Activated T-helper 1 cell treated with anti-CD3 and anti-CD28 coated beads, Interleukin-12 subunit alpha, Interleukin-12 subunit beta, Interleukin-2, Interleukin-4 antibody, amounts not matched to agents 30 ng/mL and 10 ng/mL and 1 ng/mL, durations not matched to agents 14 hours and 24 hours and 36 hours (primary cell): ENCODE measurements at regions of chr4 and their contacts with region 1.

Region 1: DNA sequence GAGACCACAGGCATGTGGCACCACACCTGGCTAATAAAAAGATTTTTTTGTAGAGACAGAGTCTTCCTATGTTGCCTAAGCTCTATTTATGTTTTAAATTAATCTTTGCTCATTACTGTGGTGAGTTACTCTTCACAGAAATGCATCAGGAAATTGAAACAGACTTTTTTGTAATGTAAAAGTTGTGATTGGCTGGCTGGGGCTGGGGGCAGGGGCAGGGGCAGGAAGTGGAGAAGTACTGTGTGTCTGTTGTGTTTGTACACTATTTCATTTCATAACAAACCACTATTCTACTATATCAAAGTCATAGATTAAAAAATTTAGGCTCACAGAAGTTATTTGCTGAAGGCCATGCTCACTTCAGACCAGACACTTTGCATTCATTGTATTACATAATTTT is 19.1 kb upstream of the ABRAXAS1 start:
- DNase-seq: no peak
- H3K4me3 Mint-ChIP-seq: no peak overlapping the region
- H3K27ac Mint-ChIP-seq: no peak overlapping the region
- H3K4me1 Mint-ChIP-seq: peaks cover 6% of the 10 kb centered on the region
- H3K27me3 Mint-ChIP-seq: no peaks in the 10 kb centered on the region

Region 2: DNA sequence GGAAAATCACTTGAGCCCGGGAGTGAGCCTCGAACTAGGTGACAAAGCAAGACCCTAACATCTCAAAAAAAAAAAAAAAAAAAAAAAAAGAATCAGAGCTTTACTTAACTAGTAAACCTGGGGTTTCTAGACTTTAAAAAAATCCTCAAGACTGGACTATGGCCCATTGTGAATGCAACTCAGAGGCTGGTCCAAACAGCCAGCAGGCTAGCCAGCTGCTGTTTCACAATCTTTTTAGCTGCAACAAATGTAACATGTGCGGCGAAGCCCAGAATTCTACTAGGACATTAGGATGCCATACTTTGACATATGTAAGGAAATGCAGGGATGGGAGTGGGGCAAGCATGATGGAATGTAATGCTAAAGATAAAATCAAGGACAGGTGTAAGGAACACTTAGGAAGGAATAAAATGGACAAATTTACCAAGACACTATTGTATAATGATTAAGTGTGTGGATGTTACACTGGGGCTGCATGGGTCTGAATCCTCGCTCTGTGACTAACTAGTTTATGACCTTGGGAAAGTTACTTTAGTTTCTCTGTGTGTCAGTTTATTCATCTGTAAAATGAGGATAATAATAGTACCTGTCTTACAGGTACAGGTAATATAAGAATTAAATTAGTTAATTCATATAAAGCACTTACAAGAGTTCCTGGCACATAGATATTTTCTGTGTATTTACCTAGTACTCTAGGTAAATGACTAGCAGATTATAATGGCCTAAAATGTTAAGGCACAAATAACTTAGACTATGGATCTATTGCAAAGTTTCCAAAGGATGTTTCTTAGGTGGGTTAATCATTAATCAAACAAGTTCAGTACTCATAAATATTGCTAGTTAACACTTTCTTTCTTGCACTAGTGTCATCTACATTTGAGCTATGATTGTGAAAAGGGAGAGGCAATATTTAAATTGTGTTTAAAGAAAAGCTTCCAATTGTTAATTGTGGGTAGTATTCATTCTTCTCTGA is 97.8 kb before region 1 on chr4:
- intact Hi-C with region 1: no loop called
- DNase-seq: no peak
- H3K4me3 Mint-ChIP-seq: no peak overlapping the region
- H3K27ac Mint-ChIP-seq: no peak overlapping the region
- H3K4me1 Mint-ChIP-seq: no peaks in the 10 kb centered on the region
- H3K27me3 Mint-ChIP-seq: no peaks in the 10 kb centered on the region

Region 3: GRCh38 chr4:83490876-83491450 is 13.0 kb before region 1 on chr4:
- intact Hi-C with region 1: loop called (anchors 2 kb)
- DNase-seq: no peak
- H3K4me3 Mint-ChIP-seq: no peak overlapping the region
- H3K27ac Mint-ChIP-seq: no peak overlapping the region
- H3K4me1 Mint-ChIP-seq: peaks cover 15% of the 10 kb centered on the region
- H3K27me3 Mint-ChIP-seq: peaks cover 7% of the 10 kb centered on the region

Region 4: DNA sequence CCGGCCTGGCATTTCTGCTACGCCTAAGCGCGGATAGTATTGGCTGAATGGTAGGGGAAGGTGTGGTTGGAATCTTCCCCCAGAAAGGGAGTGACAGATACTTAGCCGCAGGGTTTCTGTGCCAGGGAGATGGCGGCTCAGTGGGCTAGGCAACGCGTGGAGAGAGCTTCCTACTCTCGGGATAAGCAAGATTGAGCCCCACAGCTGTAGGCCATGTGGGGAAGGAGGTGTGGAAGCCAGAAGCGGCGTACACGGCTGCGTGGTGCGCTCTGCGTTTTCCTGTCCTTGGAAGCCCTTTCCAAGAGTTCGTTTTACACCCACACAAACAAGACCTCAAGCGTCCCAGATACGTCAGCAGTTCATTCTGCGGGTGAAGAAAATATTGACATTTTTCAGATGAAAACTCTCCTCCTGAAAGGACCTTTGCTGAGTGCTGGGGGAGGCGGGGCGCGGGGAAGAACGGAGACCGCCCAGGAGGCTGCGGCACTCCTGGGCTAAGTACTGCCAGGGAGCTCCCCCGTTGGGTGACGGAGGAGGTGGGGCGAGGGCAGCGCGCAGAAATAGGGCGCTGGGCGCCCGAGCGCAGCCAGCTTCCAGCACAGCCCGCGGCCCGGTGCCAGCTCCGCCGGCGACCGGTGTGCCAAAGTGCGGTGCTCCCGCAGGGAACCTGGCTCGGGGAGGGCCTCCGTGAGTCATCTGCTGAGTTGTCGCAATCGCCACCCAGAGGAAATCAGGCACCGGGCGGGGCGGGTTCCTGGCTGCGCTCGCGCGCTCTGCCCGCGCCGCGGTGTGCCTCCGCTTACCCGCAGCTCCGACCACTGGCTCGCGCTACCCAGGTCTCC is 31.8 kb after region 1 on chr4 and contains the start of gene GPAT3:
- intact Hi-C with region 1: loop called (anchors 2 kb)
- DNase-seq: peak; percentile 55
- H3K4me3 Mint-ChIP-seq: peak within 1 kb of the TSS; percentile 83
- H3K27ac Mint-ChIP-seq: peak within 1 kb of the TSS; percentile 12
- H3K4me1 Mint-ChIP-seq: peaks cover 21% of the 10 kb centered on the region
- H3K27me3 Mint-ChIP-seq: peaks cover 47% of the 10 kb centered on the region
- total RNA-seq, gene GPAT3: 5.7 and 6.6 TPM in 2 replicates

Region 5: DNA sequence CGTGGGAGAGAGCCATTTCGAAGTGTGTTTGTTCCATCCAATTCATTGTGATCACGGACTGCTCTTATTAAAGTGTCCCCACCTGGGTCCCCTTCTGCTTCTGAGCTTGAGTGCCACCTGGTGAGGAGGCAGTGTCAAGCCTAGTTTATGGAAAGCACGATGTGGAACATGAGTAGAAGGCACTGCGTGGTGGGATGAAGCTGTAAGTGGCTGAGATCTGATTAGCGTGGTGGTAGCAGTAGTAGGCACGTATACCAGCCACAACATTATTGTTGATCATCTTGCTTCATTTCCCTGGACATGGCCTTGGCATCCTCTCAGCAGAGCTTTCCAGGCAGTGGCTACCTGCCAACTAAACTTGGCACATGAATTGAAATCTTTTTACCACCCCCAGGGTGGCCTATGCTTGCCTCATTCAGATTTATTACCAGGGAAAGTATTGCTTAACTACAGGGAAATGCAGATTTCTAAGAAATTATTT is 78.4 kb after region 1 on chr4:
- intact Hi-C with region 1: loop called (anchors 5 kb)
- DNase-seq: no peak
- H3K4me3 Mint-ChIP-seq: no peak overlapping the region
- H3K27ac Mint-ChIP-seq: no peak overlapping the region
- H3K4me1 Mint-ChIP-seq: no peaks in the 10 kb centered on the region
- H3K27me3 Mint-ChIP-seq: no peaks in the 10 kb centered on the region

Region 6: GRCh38 chr4:83639849-83640493 is 136.0 kb after region 1 on chr4:
- intact Hi-C with region 1: loop called (anchors 1 kb)
- DNase-seq: peak; percentile 31
- H3K4me3 Mint-ChIP-seq: no peak overlapping the region
- H3K27ac Mint-ChIP-seq: no peak overlapping the region
- H3K4me1 Mint-ChIP-seq: peaks cover 4% of the 10 kb centered on the region
- H3K27me3 Mint-ChIP-seq: peaks cover 6% of the 10 kb centered on the region